K562 (cell line): ENCODE measurements at regions of chr6 and their contacts with region 1.

Region 1: DNA sequence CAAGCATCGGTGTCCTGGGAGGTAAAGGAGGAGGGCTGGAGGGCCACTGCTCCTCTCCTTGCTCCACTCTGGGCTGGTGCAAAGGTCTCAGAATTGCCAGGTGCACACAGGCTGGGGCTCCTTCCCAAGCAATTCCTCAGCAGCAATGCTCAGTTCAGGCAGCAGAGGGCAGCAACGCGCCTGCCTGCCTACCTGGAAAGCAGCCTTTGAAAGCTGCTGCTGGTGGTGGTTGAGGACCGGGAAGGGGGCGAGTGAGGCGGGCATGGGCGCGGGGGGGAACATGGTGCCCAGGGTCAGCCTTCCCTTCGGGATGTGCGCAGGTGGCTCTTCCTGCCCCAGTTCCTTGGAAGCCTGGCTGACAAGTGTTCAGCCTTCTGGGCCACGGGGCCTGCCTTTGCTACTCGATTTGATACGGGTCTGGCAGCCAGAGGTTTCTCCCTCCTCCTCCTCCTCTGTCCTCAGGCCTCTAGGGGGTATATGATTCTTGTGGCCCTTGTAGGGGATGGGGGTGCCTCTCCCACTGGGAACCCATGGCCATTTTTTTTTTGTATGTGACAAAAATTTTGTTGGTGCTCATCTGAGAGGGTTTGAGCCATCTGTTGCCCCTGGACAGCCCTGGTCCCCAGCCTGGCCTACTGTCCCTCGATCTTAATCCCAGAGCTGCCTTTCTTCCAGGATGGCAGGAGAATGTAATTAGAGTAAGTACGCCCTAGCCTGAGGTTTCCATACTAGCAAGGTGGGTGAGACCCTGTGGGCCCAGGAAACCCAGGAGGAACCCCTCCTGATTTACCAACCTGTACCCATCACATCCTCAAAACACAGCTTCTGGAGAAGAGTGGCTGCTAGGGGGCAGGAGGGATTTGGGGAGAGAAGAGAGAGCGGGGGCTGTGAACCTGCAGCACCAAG is 20.1 kb downstream of the MRPS18A start:
- DNase-seq: peak; percentile 84 to 91 (median 85)
- ATAC-seq: peak; percentile 80
- H3K4me3 ChIP-seq: no peak overlapping the region
- H3K27ac ChIP-seq: no peak overlapping the region
- H3K4me1 ChIP-seq: peaks cover 37 to 42% of the 10 kb centered on the region in 2 experiments
- H3K27me3 ChIP-seq: no peaks in the 10 kb centered on the region; a peak in 1 of 5 replicates
- CTCF ChIP-seq: peak; percentile 96 to 99 (median 97)
- EP300 ChIP-seq: no peak
- POLR2A ChIP-seq: 0 out of 2 replicates have a peak, but pooled peaks have one; percentile 1
- RAD21 ChIP-seq: peak; percentile 92 to 96

Region 2: DNA sequence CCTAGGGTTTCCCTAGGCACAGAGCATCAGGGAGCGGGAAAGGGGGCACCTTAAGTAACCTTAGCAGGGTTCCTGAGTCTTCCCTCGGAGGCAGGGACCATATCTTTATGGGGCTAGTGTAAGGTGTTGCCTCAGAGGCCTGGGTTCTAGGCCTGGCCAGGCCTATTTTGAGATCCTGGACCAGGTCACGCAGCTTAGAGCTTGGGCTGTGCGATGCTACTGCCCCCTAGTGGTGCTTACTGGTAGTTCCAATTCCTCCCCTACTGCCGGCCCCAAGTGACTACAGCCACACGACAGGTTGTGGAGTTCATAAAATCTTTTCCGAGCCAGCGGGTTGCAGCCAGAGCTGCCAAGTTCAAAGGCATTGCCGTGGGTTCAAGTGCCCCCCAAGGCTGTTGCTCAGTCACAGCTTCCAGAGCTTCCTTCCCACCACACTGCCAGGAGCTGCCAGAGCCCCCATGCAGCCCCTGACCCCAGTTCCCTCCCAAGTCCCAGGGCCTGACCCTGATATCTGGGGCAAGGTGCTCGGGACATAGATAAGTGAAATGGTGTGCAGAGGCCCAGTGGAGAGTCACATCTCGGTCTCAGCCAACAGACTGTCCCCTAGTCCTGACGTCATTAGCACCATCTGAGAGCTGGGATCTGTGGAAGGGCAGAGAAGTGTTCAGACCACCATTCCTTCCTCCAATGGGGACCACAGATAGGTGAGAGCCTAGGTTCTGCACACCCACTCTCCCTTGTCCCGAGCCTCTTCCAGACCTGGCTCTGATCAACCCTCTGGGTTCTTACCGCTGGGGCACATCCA is 160.6 kb before region 1 on chr6:
- CTCF ChIA-PET with region 1: no interaction called
- POLR2A ChIA-PET with region 1: no interaction called
- in situ Hi-C with region 1: no loop called
- intact Hi-C with region 1: no loop called
- DNase-seq: peak; percentile 82 to 94 (median 84)
- ATAC-seq: peak; percentile 87
- H3K4me3 ChIP-seq: no peak overlapping the region
- H3K27ac ChIP-seq: no peak overlapping the region
- H3K4me1 ChIP-seq: peaks cover 10 to 45% of the 10 kb centered on the region in 2 experiments; a peak in 4 of 5 replicates
- H3K27me3 ChIP-seq: peaks cover 0 to 6% of the 10 kb centered on the region in 2 experiments; a peak in 2 of 5 replicates
- CTCF ChIP-seq: peak; percentile 98
- EP300 ChIP-seq: no peak
- POLR2A ChIP-seq: no peak; the same call in 1 of the 2 replicates
- RAD21 ChIP-seq: peak; percentile 85 to 91

Region 3: GRCh38 chr6:43644931-43645612 is 22.4 kb before region 1 on chr6 and contains the start of gene RSPH9:
- CTCF ChIA-PET with region 1: no interaction called
- POLR2A ChIA-PET with region 1: interaction called, 23 read pairs
- in situ Hi-C with region 1: no loop called
- intact Hi-C with region 1: no loop called
- DNase-seq: peak in 2 of 4 experiments; percentile 52 to 64
- ATAC-seq: peak; percentile 24
- H3K4me3 ChIP-seq: no peak within 1 kb of the TSS
- H3K27ac ChIP-seq: no peak within 1 kb of the TSS
- H3K4me1 ChIP-seq: peaks cover 16 to 17% of the 10 kb centered on the region in 2 experiments
- H3K27me3 ChIP-seq: no peaks in the 10 kb centered on the region; a peak in 1 of 5 replicates
- CTCF ChIP-seq: no peak
- EP300 ChIP-seq: no peak
- POLR2A ChIP-seq: no peak
- RAD21 ChIP-seq: no peak
- polyA plus RNA-seq, gene RSPH9: 0.39 to 0.60 TPM

Region 4: GRCh38 chr6:43687437-43688347 is 20.2 kb after region 1 on chr6 and contains the start of gene MRPS18A:
- CTCF ChIA-PET with region 1: no interaction called
- POLR2A ChIA-PET with region 1: interaction called, 21 read pairs
- in situ Hi-C with region 1: no loop called
- intact Hi-C with region 1: no loop called
- DNase-seq: peak; percentile 92 to 94 (median 94)
- ATAC-seq: peak; percentile 99
- H3K4me3 ChIP-seq: peak within 1 kb of the TSS; percentile 87
- H3K27ac ChIP-seq: peak within 1 kb of the TSS; percentile 91
- H3K4me1 ChIP-seq: peaks cover 4 to 29% of the 10 kb centered on the region in 2 experiments; a peak in 3 of 5 replicates
- H3K27me3 ChIP-seq: no peaks in the 10 kb centered on the region
- CTCF ChIP-seq: no peak
- EP300 ChIP-seq: no peak
- POLR2A ChIP-seq: peak; percentile 94
- RAD21 ChIP-seq: peak in 1 of 2 experiments; percentile 1; a peak in 1 of 4 replicates
- polyA plus RNA-seq, gene MRPS18A: 204 to 243 TPM

Region 5: DNA sequence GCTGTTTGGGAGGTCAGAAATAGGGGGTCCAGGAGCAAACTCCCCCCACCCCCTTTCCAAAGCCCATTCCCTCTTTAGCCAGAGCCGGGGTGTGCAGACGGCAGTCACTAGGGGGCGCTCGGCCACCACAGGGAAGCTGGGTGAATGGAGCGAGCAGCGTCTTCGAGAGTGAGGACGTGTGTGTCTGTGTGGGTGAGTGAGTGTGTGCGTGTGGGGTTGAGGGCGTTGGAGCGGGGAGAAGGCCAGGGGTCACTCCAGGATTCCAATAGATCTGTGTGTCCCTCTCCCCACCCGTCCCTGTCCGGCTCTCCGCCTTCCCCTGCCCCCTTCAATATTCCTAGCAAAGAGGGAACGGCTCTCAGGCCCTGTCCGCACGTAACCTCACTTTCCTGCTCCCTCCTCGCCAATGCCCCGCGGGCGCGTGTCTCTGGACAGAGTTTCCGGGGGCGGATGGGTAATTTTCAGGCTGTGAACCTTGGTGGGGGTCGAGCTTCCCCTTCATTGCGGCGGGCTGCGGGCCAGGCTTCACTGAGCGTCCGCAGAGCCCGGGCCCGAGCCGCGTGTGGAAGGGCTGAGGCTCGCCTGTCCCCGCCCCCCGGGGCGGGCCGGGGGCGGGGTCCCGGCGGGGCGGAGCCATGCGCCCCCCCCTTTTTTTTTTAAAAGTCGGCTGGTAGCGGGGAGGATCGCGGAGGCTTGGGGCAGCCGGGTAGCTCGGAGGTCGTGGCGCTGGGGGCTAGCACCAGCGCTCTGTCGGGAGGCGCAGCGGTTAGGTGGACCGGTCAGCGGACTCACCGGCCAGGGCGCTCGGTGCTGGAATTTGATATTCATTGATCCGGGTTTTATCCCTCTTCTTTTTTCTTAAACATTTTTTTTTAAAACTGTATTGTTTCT is 102.3 kb after region 1 on chr6 and contains the start of gene VEGFA:
- CTCF ChIA-PET with region 1: interaction called, 11 read pairs
- POLR2A ChIA-PET with region 1: interaction called, 13 read pairs
- in situ Hi-C with region 1: loop called (anchors 5 kb)
- intact Hi-C with region 1: loop called (anchors 5 kb)
- DNase-seq: peak; percentile 94 to 99 (median 98)
- ATAC-seq: peak; percentile 75
- H3K4me3 ChIP-seq: peak within 1 kb of the TSS; percentile 97
- H3K27ac ChIP-seq: peak within 1 kb of the TSS; percentile 91
- H3K4me1 ChIP-seq: peaks cover 18 to 58% of the 10 kb centered on the region in 2 experiments
- H3K27me3 ChIP-seq: no peaks in the 10 kb centered on the region
- CTCF ChIP-seq: peak; percentile 97 to 99 (median 97)
- EP300 ChIP-seq: no peak
- POLR2A ChIP-seq: peak; percentile 91
- RAD21 ChIP-seq: peak; percentile 97 to 99
- polyA plus RNA-seq, gene VEGFA: 14.0 to 16.0 TPM

Region 6: GRCh38 chr6:43951063-43951755 is 283.7 kb after region 1 on chr6:
- CTCF ChIA-PET with region 1: no interaction called
- POLR2A ChIA-PET with region 1: no interaction called
- in situ Hi-C with region 1: no loop called
- intact Hi-C with region 1: loop called (anchors 5 kb)
- DNase-seq: peak; percentile 63 to 78 (median 73)
- ATAC-seq: peak; percentile 85
- H3K4me3 ChIP-seq: no peak overlapping the region
- H3K27ac ChIP-seq: peak overlapping the region; percentile 37; the same call in 2 of the 3 replicates
- H3K4me1 ChIP-seq: peaks cover 29 to 61% of the 10 kb centered on the region in 2 experiments
- H3K27me3 ChIP-seq: no peaks in the 10 kb centered on the region
- CTCF ChIP-seq: peak; percentile 85 to 98 (median 97)
- EP300 ChIP-seq: no peak; the same call in 1 of the 2 replicates
- POLR2A ChIP-seq: no peak
- RAD21 ChIP-seq: peak; percentile 96 to 99

Region 7: DNA sequence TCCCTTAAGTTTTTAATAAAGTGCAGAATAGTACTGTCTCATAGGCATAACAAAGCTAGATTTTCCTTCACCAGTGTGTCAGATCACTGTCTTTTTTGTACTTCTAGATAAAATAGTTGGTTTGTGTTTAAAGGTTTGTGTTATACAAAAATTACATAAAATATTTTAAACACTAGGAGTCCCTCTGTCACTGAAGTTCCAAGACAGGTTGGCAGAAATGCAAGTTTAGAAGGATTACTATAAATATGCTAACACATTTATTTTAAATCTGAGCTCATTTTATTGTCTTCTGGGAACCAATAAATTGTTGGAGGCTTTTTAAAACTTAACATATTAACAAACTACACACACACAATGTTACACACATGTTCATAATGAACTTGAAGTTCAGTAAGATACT is 1629.8 kb after region 1 on chr6:
- CTCF ChIA-PET with region 1: no interaction called
- POLR2A ChIA-PET with region 1: no interaction called
- in situ Hi-C with region 1: no loop called
- intact Hi-C with region 1: no loop called
- DNase-seq: no peak
- ATAC-seq: no peak
- H3K4me3 ChIP-seq: no peak overlapping the region
- H3K27ac ChIP-seq: no peak overlapping the region
- H3K4me1 ChIP-seq: peaks cover 2 to 25% of the 10 kb centered on the region in 2 experiments; a peak in 3 of 5 replicates
- H3K27me3 ChIP-seq: no peaks in the 10 kb centered on the region
- CTCF ChIP-seq: no peak
- EP300 ChIP-seq: no peak
- POLR2A ChIP-seq: no peak
- RAD21 ChIP-seq: no peak